Right lobe of liver (tissue), 6 donors: ENCODE measurements at regions of chr1 and their contacts with region 1.

Region 1: DNA sequence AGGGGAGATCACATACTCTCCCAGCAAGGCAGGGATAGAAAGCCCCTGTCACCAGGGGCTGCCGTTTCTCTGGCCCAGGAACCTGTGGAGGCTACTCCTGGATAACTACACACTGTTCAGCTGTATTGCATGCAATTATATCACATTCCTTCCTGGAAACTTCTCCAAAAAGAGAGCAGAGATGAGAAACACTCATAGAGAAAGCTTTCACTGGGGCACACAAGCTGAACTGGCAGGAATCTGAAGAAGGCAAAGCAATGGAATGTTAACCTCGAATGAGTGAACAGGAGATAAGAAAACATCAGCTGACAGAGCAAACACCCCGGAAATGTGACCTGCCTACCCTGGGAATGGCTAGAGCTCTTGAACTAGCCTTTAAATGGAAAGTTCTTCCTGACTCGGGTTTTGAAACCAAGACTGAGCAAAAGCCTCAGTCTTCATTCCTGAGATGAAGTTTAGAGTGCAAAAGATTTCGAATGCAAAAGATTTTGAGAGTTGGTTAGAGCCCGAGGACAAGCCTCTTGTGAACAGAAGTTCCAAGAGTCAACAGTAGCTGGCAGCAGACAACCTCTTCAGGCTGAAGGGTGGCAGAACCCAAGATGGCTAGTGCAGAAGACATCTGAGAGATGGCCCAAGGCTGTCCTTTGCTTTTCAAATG is 32.3 kb downstream of the CCN1 start:
- DNase-seq: peak in 1 of 3 donors; percentile 54
- ATAC-seq: peak; percentile 81 to 90 (median 84)
- H3K4me3 ChIP-seq: no peak overlapping the region
- H3K27ac ChIP-seq: peak overlapping the region; percentile 8 to 27 (median 24)
- H3K4me1 ChIP-seq: peaks cover 0 to 7% (median 3%) of the 10 kb centered on the region in 4 donors
- H3K27me3 ChIP-seq: no peaks in the 10 kb centered on the region
- CTCF ChIP-seq: peak; percentile 41 to 76 (median 60)
- POLR2A ChIP-seq: no peak

Region 2: GRCh38 chr1:85692730-85693314 is 80.0 kb after region 1 on chr1:
- intact Hi-C with region 1: loop called in 1 of 2 experiments (anchors 10 kb)
- DNase-seq: no peak
- ATAC-seq: peak in 2 of 4 donors; percentile 41 to 42
- H3K4me3 ChIP-seq: no peak overlapping the region
- H3K27ac ChIP-seq: no peak overlapping the region
- H3K4me1 ChIP-seq: peaks cover 0 to 5% (median 0%) of the 10 kb centered on the region in 4 donors
- H3K27me3 ChIP-seq: no peaks in the 10 kb centered on the region
- CTCF ChIP-seq: peak; percentile 45 to 56 (median 50)
- POLR2A ChIP-seq: no peak